ENCODE measurements at regions of chr12 and their contacts with region 1.

Region 1: GRCh38 chr12:51020448-51021182 is 5.6 kb downstream of the SLC11A2 start:
- DNase-seq: no peak
- H3K4me3 ChIP-seq: no peak overlapping the region
- H3K4me3 Mint-ChIP-seq: no peak overlapping the region
- H3K27ac ChIP-seq: peak overlapping the region in 1 of 2 donors; percentile 61
- H3K27ac Mint-ChIP-seq: peak overlapping the region in 4 of 7 donors; percentile 35 to 79 (median 56)
- H3K4me1 ChIP-seq: peaks cover 47 to 59% of the 10 kb centered on the region in 2 donors
- H3K4me1 Mint-ChIP-seq: peaks cover 53% of the 10 kb centered on the region
- H3K27me3 ChIP-seq: no peaks in the 10 kb centered on the region
- H3K27me3 Mint-ChIP-seq: peaks cover 0 to 2% (median 2%) of the 10 kb centered on the region in 3 donors
- CTCF ChIP-seq: no peak

Region 2: GRCh38 chr12:50924439-50925341 is 95.9 kb before region 1 on chr12:
- intact Hi-C with region 1: loop called in 1 of 2 experiments (anchors 5 kb)
- DNase-seq: peak; percentile 70 to 76 (median 72)
- H3K4me3 ChIP-seq: peak overlapping the region; percentile 59 to 98 (median 87)
- H3K4me3 Mint-ChIP-seq: peak overlapping the region; percentile 98 to 100
- H3K27ac ChIP-seq: peak overlapping the region; percentile 50 to 83
- H3K27ac Mint-ChIP-seq: peak overlapping the region; percentile 95 to 98 (median 96)
- H3K4me1 ChIP-seq: peaks cover 41 to 59% of the 10 kb centered on the region in 2 donors
- H3K4me1 Mint-ChIP-seq: peaks cover 62% of the 10 kb centered on the region
- H3K27me3 ChIP-seq: no peaks in the 10 kb centered on the region
- H3K27me3 Mint-ChIP-seq: peaks cover 0 to 2% (median 0%) of the 10 kb centered on the region in 3 donors
- CTCF ChIP-seq: no peak